ENCODE measurements at regions of chr12 and their contacts with region 1.

Region 1: GRCh38 chr12:54032627-54033100 is at the start of gene HOXC5:
- DNase-seq: peak; percentile 68 to 93
- H3K4me3 ChIP-seq: peak within 1 kb of the TSS in 1 of 4 experiments; percentile 9; a peak in 2 of 8 replicates
- H3K27ac ChIP-seq: no peak within 1 kb of the TSS
- H3K4me1 ChIP-seq: peaks cover 0 to 9% (median 2%) of the 10 kb centered on the region in 4 experiments; a peak in 5 of 7 replicates
- H3K27me3 ChIP-seq: peaks cover 94 to 100% (median 98%) of the 10 kb centered on the region in 4 experiments
- CTCF ChIP-seq: peak; percentile 85 to 93 (median 90)
- EP300 ChIP-seq: no peak
- POLR2A ChIP-seq: no peak
- RAD21 ChIP-seq: peak; percentile 96 to 97
- total RNA-seq, gene HOXC5: not detected in 2 replicates

Region 2: GRCh38 chr12:53984901-53985709 is 47.6 kb before region 1 on chr12 and contains the start of gene HOXC10:
- CTCF ChIA-PET with region 1: interaction called, 30 read pairs
- POLR2A ChIA-PET with region 1: no interaction called
- DNase-seq: peak in 1 of 2 experiments; percentile 93
- H3K4me3 ChIP-seq: peak within 1 kb of the TSS in 1 of 4 experiments; percentile 38; a peak in 2 of 8 replicates
- H3K27ac ChIP-seq: no peak within 1 kb of the TSS
- H3K4me1 ChIP-seq: peaks cover 0 to 6% (median 3%) of the 10 kb centered on the region in 4 experiments; a peak in 3 of 7 replicates
- H3K27me3 ChIP-seq: peaks cover 92 to 99% (median 97%) of the 10 kb centered on the region in 4 experiments
- CTCF ChIP-seq: peak; percentile 84 to 97 (median 89)
- EP300 ChIP-seq: 0 out of 3 replicates have a peak, but pooled peaks of 1 of the 2 experiments have one; percentile 18
- POLR2A ChIP-seq: no peak
- RAD21 ChIP-seq: peak; percentile 87 to 89
- total RNA-seq, gene HOXC10: not detected in 2 replicates

Region 3: DNA sequence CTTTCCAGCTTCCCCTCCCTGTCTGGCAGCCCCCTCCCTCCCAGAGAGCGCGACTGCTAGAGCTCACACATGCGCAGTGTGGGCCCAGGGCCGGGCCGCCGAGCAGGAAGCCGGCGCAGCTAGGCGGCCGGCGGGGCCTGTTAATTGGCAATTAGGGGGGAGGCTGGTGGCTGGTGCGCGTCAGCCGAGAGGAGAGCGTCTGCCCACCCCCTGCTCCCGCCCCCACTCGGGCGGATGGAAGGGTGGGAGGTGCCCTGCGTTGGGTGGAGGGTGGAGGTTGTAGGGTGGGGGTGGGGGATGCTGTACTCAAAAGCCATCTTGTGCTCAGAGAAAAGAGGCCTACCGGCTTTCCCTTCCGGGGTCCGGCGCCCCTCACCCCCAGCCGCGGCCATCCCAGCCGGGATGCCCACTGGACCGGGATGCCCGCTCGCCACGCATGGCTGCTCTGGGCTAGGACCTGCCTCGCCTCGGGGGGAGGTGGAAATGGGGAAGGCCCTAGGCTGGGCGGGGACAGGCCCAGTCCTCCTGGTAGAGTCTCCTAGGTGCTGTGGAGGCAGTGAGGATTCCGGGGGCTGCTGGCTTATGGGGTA is 14.7 kb before region 1 on chr12:
- CTCF ChIA-PET with region 1: interaction called, 31 read pairs
- POLR2A ChIA-PET with region 1: interaction called, 3 read pairs
- DNase-seq: peak in 1 of 2 experiments; percentile 83
- H3K4me3 ChIP-seq: peak overlapping the region in 3 of 4 experiments; percentile 9 to 54 (median 26); a peak in 5 of 8 replicates
- H3K27ac ChIP-seq: no peak overlapping the region
- H3K4me1 ChIP-seq: peaks cover 0 to 12% (median 4%) of the 10 kb centered on the region in 4 experiments; a peak in 6 of 7 replicates
- H3K27me3 ChIP-seq: peaks cover 95 to 100% (median 100%) of the 10 kb centered on the region in 4 experiments
- CTCF ChIP-seq: no peak
- EP300 ChIP-seq: no peak
- POLR2A ChIP-seq: no peak
- RAD21 ChIP-seq: no peak

Region 4: DNA sequence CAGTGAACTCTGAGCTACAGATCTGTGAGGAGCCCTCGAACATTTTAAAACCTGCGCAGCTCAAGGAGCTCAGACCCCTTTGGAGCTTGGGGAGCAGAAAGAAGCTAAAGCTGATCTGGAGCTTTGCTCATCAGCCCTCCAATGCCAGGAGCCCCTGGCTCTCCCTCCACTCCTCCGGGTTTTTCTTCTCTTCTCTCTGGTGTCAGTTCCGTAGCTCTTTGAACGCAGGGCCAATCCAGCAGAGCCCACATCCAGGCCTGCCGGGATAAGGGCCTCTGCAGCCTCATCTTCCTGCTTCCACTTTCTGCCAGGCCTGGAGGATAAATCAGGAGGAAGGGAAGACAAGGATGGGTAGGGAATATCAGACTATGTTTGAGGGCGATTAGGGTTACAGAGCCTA is 27.0 kb after region 1 on chr12:
- CTCF ChIA-PET with region 1: interaction called, 34 read pairs
- POLR2A ChIA-PET with region 1: no interaction called
- DNase-seq: no peak
- H3K4me3 ChIP-seq: no peak overlapping the region
- H3K27ac ChIP-seq: no peak overlapping the region
- H3K4me1 ChIP-seq: peaks cover 4 to 14% (median 7%) of the 10 kb centered on the region in 4 experiments
- H3K27me3 ChIP-seq: peaks cover 83 to 98% (median 95%) of the 10 kb centered on the region in 4 experiments
- CTCF ChIP-seq: no peak
- EP300 ChIP-seq: no peak
- POLR2A ChIP-seq: no peak
- RAD21 ChIP-seq: no peak

Region 5: GRCh38 chr12:54140588-54141388 is 108.1 kb after region 1 on chr12:
- CTCF ChIA-PET with region 1: interaction called, 45 read pairs
- POLR2A ChIA-PET with region 1: no interaction called
- DNase-seq: no peak
- H3K4me3 ChIP-seq: no peak overlapping the region
- H3K27ac ChIP-seq: no peak overlapping the region
- H3K4me1 ChIP-seq: peaks cover 0 to 9% (median 2%) of the 10 kb centered on the region in 4 experiments; a peak in 3 of 7 replicates
- H3K27me3 ChIP-seq: peaks cover under 1 to 57% (median 26%) of the 10 kb centered on the region in 4 experiments
- CTCF ChIP-seq: no peak
- EP300 ChIP-seq: no peak
- POLR2A ChIP-seq: no peak
- RAD21 ChIP-seq: no peak

Region 6: GRCh38 chr12:54191550-54192022 is 158.9 kb after region 1 on chr12:
- CTCF ChIA-PET with region 1: interaction called, 339 read pairs
- POLR2A ChIA-PET with region 1: no interaction called
- DNase-seq: peak; percentile 62 to 85
- H3K4me3 ChIP-seq: no peak overlapping the region
- H3K27ac ChIP-seq: no peak overlapping the region
- H3K4me1 ChIP-seq: no peaks in the 10 kb centered on the region; a peak in 2 of 7 replicates
- H3K27me3 ChIP-seq: peaks cover 6 to 50% (median 30%) of the 10 kb centered on the region in 4 experiments
- CTCF ChIP-seq: peak; percentile 73 to 93 (median 86)
- EP300 ChIP-seq: no peak
- POLR2A ChIP-seq: no peak
- RAD21 ChIP-seq: peak; percentile 92 to 96

Measured in H1 (cell line).